ENCODE measurements at regions of chr1 and their contacts with region 1.

Region 1: GRCh38 chr1:75953461-75953860 is 21.3 kb upstream of the ASB17 start:
- DNase-seq: peak; percentile 66 to 74
- H3K4me3 ChIP-seq: no peak overlapping the region
- H3K4me3 Mint-ChIP-seq: no peak overlapping the region
- H3K27ac Mint-ChIP-seq: peak overlapping the region; percentile 22
- H3K4me1 ChIP-seq: peaks cover 44% of the 10 kb centered on the region
- H3K4me1 Mint-ChIP-seq: peaks cover 21% of the 10 kb centered on the region
- H3K27me3 ChIP-seq: no peaks in the 10 kb centered on the region
- H3K27me3 Mint-ChIP-seq: no peaks in the 10 kb centered on the region
- CTCF ChIP-seq: no peak

Region 2: DNA sequence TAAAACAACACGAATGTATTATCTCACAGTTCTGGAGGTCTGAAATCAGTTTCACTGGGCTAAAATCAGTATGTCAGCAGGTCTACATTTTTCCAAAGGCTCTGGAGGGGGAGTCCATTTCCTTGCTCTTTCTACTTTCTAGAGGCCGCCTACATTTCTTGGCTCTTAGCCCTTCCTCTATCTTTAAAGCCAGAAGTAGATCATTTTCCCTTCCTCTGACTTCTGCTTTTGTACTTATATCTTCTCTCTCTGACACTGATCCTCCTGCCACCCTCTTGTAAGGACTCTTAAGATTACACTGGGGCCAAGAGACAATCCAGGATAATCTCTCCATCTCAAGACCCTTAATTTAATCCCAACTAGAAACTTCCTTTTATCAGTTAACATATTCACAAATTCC is 115.4 kb before region 1 on chr1:
- CTCF ChIA-PET with region 1: no interaction called
- POLR2A ChIA-PET with region 1: no interaction called
- intact Hi-C with region 1: loop called (anchors 2 kb)
- DNase-seq: no peak
- H3K4me3 ChIP-seq: no peak overlapping the region
- H3K4me3 Mint-ChIP-seq: no peak overlapping the region
- H3K27ac Mint-ChIP-seq: no peak overlapping the region
- H3K4me1 ChIP-seq: peaks cover 5% of the 10 kb centered on the region; the same call in 1 of the 2 replicates
- H3K4me1 Mint-ChIP-seq: peaks cover 11% of the 10 kb centered on the region
- H3K27me3 ChIP-seq: no peaks in the 10 kb centered on the region
- H3K27me3 Mint-ChIP-seq: no peaks in the 10 kb centered on the region
- CTCF ChIP-seq: no peak

Region 3: DNA sequence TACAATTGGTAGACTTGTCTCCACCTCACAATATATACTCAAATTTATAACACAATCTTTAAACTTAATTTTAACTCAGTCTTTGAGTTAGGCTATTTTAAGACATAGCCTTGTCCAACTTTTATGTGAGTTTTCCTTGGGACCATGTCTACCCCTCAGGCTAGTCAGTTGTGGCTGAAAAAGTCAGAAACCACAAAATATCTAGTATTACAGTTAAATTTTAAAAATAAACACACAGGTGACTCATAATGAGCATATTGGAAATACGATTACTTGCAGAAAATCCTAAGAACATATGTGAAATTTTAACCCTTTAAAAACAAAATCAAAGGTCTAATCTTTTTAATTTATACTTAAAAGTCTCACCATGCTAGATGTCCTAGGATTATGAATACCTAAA is 16.4 kb before region 1 on chr1:
- CTCF ChIA-PET with region 1: no interaction called
- POLR2A ChIA-PET with region 1: no interaction called
- intact Hi-C with region 1: loop called (anchors 1 kb)
- DNase-seq: no peak
- H3K4me3 ChIP-seq: no peak overlapping the region
- H3K4me3 Mint-ChIP-seq: no peak overlapping the region
- H3K27ac Mint-ChIP-seq: no peak overlapping the region
- H3K4me1 ChIP-seq: 0 out of 2 replicates have a peak, but pooled peaks cover 7% of the 10 kb centered on the region
- H3K4me1 Mint-ChIP-seq: peaks cover 6% of the 10 kb centered on the region
- H3K27me3 ChIP-seq: no peaks in the 10 kb centered on the region
- H3K27me3 Mint-ChIP-seq: no peaks in the 10 kb centered on the region
- CTCF ChIP-seq: no peak

Region 4: GRCh38 chr1:75964760-75965408 is 11.4 kb after region 1 on chr1:
- CTCF ChIA-PET with region 1: no interaction called
- POLR2A ChIA-PET with region 1: no interaction called
- intact Hi-C with region 1: loop called (anchors 1 kb)
- DNase-seq: no peak
- H3K4me3 ChIP-seq: no peak overlapping the region
- H3K4me3 Mint-ChIP-seq: no peak overlapping the region
- H3K27ac Mint-ChIP-seq: no peak overlapping the region
- H3K4me1 ChIP-seq: no peaks in the 10 kb centered on the region
- H3K4me1 Mint-ChIP-seq: peaks cover 10% of the 10 kb centered on the region
- H3K27me3 ChIP-seq: no peaks in the 10 kb centered on the region
- H3K27me3 Mint-ChIP-seq: no peaks in the 10 kb centered on the region
- CTCF ChIP-seq: no peak